ENCODE measurements at regions of chr9 and their contacts with region 1.

Region 1: GRCh38 chr9:109119439-109120203 is at the start of gene TMEM245:
- DNase-seq: peak; percentile 99
- H3K4me3 ChIP-seq: peak within 1 kb of the TSS; percentile 96
- H3K27ac ChIP-seq: peak within 1 kb of the TSS; percentile 80
- H3K4me1 ChIP-seq: peaks cover 56% of the 10 kb centered on the region
- CTCF ChIP-seq: no peak
- total RNA-seq, gene TMEM245: 19.4 and 22.0 TPM in 2 replicates

Region 2: GRCh38 chr9:108830272-108830671 is 289.3 kb before region 1 on chr9:
- CTCF ChIA-PET with region 1: no interaction called
- POLR2A ChIA-PET with region 1: no interaction called
- intact Hi-C with region 1: no loop called
- DNase-seq: no peak
- H3K4me3 ChIP-seq: no peak overlapping the region
- H3K27ac ChIP-seq: no peak overlapping the region
- H3K4me1 ChIP-seq: no peaks in the 10 kb centered on the region
- CTCF ChIP-seq: no peak

Region 3: DNA sequence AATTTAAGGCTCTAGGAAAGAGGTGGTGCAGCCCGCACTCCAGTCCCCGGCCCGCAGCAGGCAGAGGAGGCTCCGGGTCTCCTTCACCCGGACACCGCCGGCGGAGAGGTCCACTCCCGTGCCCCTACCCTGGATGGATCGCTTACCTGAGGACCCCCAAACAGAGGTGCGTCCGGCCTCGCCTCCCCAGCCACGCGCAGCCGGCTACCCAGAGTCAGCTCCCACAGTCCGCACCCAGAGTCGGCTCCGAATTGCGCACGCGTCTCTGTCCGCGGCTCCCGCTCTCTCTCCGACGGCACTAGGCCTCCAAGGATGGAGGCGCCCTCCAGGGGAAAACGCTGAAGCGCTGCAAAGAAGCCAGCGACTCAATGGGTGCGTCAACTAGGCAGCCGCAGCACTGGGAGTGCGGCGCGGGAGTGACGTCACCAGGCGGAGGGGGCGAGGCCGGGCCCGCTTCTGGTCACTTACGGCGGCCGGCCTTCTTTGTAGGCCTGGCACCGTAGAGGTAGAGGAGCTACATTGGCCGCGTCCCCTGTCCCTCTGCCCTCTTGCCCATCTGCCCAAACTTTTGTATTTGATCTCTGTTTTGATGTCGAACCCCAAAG is 185.8 kb before region 1 on chr9 and contains the start of gene ELP1:
- CTCF ChIA-PET with region 1: no interaction called
- POLR2A ChIA-PET with region 1: no interaction called
- intact Hi-C with region 1: loop called (anchors 5 kb)
- DNase-seq: peak; percentile 95
- H3K4me3 ChIP-seq: peak within 1 kb of the TSS; percentile 98
- H3K27ac ChIP-seq: peak within 1 kb of the TSS; percentile 70
- H3K4me1 ChIP-seq: peaks cover 22% of the 10 kb centered on the region
- CTCF ChIP-seq: peak; percentile 62; the same call in 1 of the 2 replicates
- total RNA-seq, gene ELP1: 32.5 and 42.0 TPM in 2 replicates

Region 4: GRCh38 chr9:109012876-109013678 is 106.5 kb before region 1 on chr9 and contains the start of gene CTNNAL1:
- CTCF ChIA-PET with region 1: no interaction called
- POLR2A ChIA-PET with region 1: no interaction called
- intact Hi-C with region 1: loop called (anchors 2 kb)
- DNase-seq: peak; percentile 91
- H3K4me3 ChIP-seq: peak within 1 kb of the TSS; percentile 99
- H3K27ac ChIP-seq: peak within 1 kb of the TSS; percentile 38
- H3K4me1 ChIP-seq: peaks cover 32% of the 10 kb centered on the region
- CTCF ChIP-seq: no peak
- total RNA-seq, gene CTNNAL1: 31.2 and 32.0 TPM in 2 replicates

Region 5: GRCh38 chr9:109107402-109108240 is 12.0 kb before region 1 on chr9:
- CTCF ChIA-PET with region 1: interaction called, 3 read pairs
- POLR2A ChIA-PET with region 1: interaction called, 53 read pairs
- intact Hi-C with region 1: no loop called
- DNase-seq: no peak
- H3K4me3 ChIP-seq: peak overlapping the region; percentile 42
- H3K27ac ChIP-seq: peak overlapping the region; percentile 76
- H3K4me1 ChIP-seq: peaks cover 76% of the 10 kb centered on the region
- CTCF ChIP-seq: no peak

Region 6: GRCh38 chr9:109171926-109172325 is 52.3 kb after region 1 on chr9:
- CTCF ChIA-PET with region 1: no interaction called
- POLR2A ChIA-PET with region 1: no interaction called
- intact Hi-C with region 1: no loop called
- DNase-seq: no peak
- H3K4me3 ChIP-seq: no peak overlapping the region
- H3K27ac ChIP-seq: no peak overlapping the region
- H3K4me1 ChIP-seq: no peaks in the 10 kb centered on the region
- CTCF ChIP-seq: no peak